ENCODE measurements at regions of chr1 and their contacts with region 1.

Region 1: DNA sequence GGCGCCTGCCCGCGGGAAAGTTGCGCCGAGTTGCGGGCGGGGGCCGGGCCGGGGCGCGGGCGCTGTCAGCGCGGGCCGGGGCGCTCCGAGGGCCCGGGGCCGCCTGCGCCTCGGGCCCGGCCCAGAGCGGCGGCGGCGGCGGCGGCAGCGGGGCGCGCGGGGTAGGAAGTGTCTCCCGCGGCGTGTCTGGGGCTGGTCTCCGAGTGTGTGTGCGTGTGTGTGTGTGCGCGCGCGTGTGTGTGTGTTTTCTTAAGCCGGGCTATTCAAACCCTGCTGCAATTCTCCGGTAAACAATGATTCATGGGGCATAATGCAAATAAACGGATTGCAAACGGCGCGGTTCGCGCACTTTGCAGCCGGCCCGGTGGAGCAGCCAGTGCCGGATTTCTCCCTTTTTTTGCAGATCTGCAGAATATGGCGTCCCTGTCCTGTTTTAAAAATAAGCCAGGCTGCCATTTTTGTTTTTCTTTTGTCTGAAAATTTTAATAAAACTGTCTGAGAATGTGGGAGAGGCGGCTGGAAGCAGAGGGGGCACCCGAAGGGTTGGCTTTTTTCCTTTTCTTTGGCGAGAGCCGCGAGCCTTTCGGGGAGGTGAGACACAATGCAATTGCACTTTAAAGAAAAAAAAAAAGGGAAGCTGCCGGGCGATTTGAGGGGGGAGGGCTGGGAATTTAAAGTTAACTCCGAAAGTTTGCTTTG is 558 bp downstream of the ZNF362 start:
- DNase-seq: peak; percentile 10 to 73 (median 38)
- H3K4me3 ChIP-seq: peak overlapping the region; percentile 67
- H3K4me3 Mint-ChIP-seq: peak overlapping the region; percentile 98 to 100 (median 99)
- H3K27ac ChIP-seq: peak overlapping the region; percentile 26
- H3K27ac Mint-ChIP-seq: peak overlapping the region; percentile 68 to 97 (median 95)
- H3K4me1 ChIP-seq: peaks cover 38% of the 10 kb centered on the region
- H3K4me1 Mint-ChIP-seq: peaks cover 36 to 48% (median 45%) of the 10 kb centered on the region in 3 donors
- H3K27me3 ChIP-seq: no peaks in the 10 kb centered on the region
- H3K27me3 Mint-ChIP-seq: no peaks in the 10 kb centered on the region

Region 2: GRCh38 chr1:33181921-33182341 is 74.9 kb before region 1 on chr1 and contains the start of gene TRIM62:
- CTCF ChIA-PET with region 1: no interaction called
- POLR2A ChIA-PET with region 1: interaction called, 12 read pairs
- DNase-seq: peak; percentile 72 to 84 (median 72)
- H3K4me3 ChIP-seq: peak within 1 kb of the TSS; percentile 83
- H3K4me3 Mint-ChIP-seq: peak within 1 kb of the TSS; percentile 81 to 95 (median 88)
- H3K27ac ChIP-seq: no peak within 1 kb of the TSS
- H3K27ac Mint-ChIP-seq: peak within 1 kb of the TSS; percentile 31 to 95 (median 82)
- H3K4me1 ChIP-seq: peaks cover 14% of the 10 kb centered on the region
- H3K4me1 Mint-ChIP-seq: peaks cover 34 to 42% (median 38%) of the 10 kb centered on the region in 3 donors
- H3K27me3 ChIP-seq: peaks cover 4% of the 10 kb centered on the region
- H3K27me3 Mint-ChIP-seq: peaks cover 0 to 15% of the 10 kb centered on the region in 2 donors
- total RNA-seq, gene TRIM62: 5.0 to 5.5 TPM

Region 3: GRCh38 chr1:33244143-33244820 is 12.6 kb before region 1 on chr1:
- CTCF ChIA-PET with region 1: no interaction called
- POLR2A ChIA-PET with region 1: no interaction called
- DNase-seq: no peak
- H3K4me3 ChIP-seq: no peak overlapping the region
- H3K4me3 Mint-ChIP-seq: no peak overlapping the region
- H3K27ac ChIP-seq: no peak overlapping the region
- H3K27ac Mint-ChIP-seq: no peak overlapping the region
- H3K4me1 ChIP-seq: no peaks in the 10 kb centered on the region
- H3K4me1 Mint-ChIP-seq: no peaks in the 10 kb centered on the region
- H3K27me3 ChIP-seq: no peaks in the 10 kb centered on the region
- H3K27me3 Mint-ChIP-seq: peaks cover 4 to 35% of the 10 kb centered on the region in 2 donors